Activated T-helper 1 cell treated with anti-CD3 and anti-CD28 coated beads, Interleukin-12 subunit alpha, Interleukin-12 subunit beta, Interleukin-2, Interleukin-4 antibody, amounts not matched to agents 30 ng/mL and 10 ng/mL and 1 ng/mL, durations not matched to agents 14 hours and 24 hours and 36 hours (primary cell): ENCODE measurements at regions of chr22 and their contacts with region 1.

Region 1: GRCh38 chr22:40044102-40044869 is 49.5 kb downstream of the FAM83F start:
- DNase-seq: peak; percentile 98
- H3K4me3 Mint-ChIP-seq: peak overlapping the region; percentile 90
- H3K27ac Mint-ChIP-seq: peak overlapping the region; percentile 100
- H3K4me1 Mint-ChIP-seq: peaks cover 17% of the 10 kb centered on the region
- H3K27me3 Mint-ChIP-seq: peaks cover 3% of the 10 kb centered on the region

Region 2: GRCh38 chr22:40368016-40368415 is 323.7 kb after region 1 on chr22:
- intact Hi-C with region 1: loop called (anchors 1 kb)
- DNase-seq: no peak
- H3K4me3 Mint-ChIP-seq: no peak overlapping the region
- H3K27ac Mint-ChIP-seq: no peak overlapping the region
- H3K4me1 Mint-ChIP-seq: peaks cover 16% of the 10 kb centered on the region
- H3K27me3 Mint-ChIP-seq: no peaks in the 10 kb centered on the region